Common myeloid progenitor, CD34-positive (primary cell): ENCODE measurements at regions of chr12 and their contacts with region 1.

Region 1: DNA sequence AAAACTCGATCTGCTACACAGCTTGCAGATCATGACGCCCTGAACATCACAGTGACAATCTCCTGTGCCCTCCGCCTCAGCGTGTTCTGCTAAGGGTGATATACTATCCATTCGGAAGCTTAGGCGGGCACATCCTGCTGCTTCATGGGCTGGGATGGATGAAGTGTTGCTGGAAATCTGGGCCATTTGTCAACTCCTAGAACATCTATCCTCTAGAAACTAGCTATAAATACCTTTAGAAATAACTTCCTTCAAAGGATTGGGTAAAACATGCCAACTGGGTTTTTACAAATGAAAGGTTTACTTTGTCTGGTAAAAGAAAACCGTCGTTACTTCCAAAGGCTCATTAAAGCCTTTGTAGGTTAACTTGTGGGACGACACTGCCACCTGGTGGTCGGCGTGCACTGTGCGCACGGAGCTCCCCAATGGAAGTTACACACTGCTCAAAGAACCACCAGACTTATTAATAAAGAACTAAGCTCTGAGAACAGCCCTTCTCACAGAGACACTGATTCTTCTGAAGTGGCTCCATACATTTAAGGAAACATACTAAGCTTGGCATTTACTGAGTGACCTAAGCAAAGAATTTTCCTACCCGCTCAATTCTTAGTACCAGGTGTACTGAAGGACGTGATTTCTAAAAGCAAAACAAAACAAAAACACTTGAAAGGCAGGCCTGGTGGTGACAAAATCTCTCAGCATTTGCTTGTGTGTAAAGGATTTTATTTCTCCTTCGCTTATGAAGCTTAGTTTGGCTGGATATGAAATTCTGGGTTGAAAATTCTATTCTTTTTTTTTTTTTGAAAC is 21.6 kb upstream of the CACNA2D4 start:
- DNase-seq: peak; percentile 83 to 93 (median 89)
- H3K4me3 ChIP-seq: no peak overlapping the region
- H3K27ac ChIP-seq: no peak overlapping the region
- H3K4me1 ChIP-seq: peaks cover 0 to 3% (median 2%) of the 10 kb centered on the region in 4 experiments
- H3K27me3 ChIP-seq: no peaks in the 10 kb centered on the region

Region 2: DNA sequence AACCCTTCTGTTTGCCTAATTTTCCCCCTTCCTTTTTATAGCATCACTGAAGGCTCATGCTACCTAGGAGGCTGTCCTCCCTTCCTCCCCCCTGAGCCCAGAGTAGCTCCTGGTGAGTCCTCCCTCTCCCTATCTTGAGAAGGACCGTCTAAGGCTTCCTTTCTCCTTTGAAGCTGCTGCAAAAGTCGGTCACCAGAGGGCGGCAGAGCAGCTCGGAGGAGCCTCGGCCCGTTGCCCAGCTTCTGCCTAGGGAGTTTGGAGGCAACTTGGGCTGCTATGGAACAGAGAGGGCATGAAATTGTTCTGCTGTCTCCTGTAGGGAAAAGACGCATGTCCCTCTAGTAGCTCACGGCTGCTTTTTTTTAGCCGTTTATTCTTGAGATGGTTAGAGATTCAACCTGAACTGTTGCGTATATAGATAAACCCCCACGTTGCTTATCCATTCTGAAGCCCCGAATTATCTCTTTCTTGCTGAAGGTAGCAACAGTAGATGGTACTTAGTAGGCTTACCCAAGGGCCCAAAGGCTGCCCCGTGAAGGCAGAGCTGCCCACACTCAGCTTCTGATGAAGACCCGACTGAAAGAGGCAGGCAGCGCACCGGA is 305.3 kb before region 1 on chr12:
- CTCF ChIA-PET with region 1: interaction called, 16 read pairs
- POLR2A ChIA-PET with region 1: no interaction called
- DNase-seq: peak; percentile 64 to 76 (median 66)
- H3K4me3 ChIP-seq: no peak overlapping the region
- H3K27ac ChIP-seq: no peak overlapping the region
- H3K4me1 ChIP-seq: peaks cover 2 to 24% (median 18%) of the 10 kb centered on the region in 4 experiments
- H3K27me3 ChIP-seq: peaks cover 2 to 41% (median 26%) of the 10 kb centered on the region in 5 experiments

Region 3: GRCh38 chr12:1795785-1796514 is 144.1 kb before region 1 on chr12:
- CTCF ChIA-PET with region 1: interaction called, 108 read pairs
- POLR2A ChIA-PET with region 1: interaction called, 11 read pairs
- DNase-seq: peak; percentile 90 to 92 (median 92)
- H3K4me3 ChIP-seq: peak overlapping the region; percentile 49 to 85 (median 66)
- H3K27ac ChIP-seq: peak overlapping the region in 1 of 2 experiments; percentile 6
- H3K4me1 ChIP-seq: peaks cover 0 to 22% (median 18%) of the 10 kb centered on the region in 4 experiments
- H3K27me3 ChIP-seq: no peaks in the 10 kb centered on the region

Region 4: DNA sequence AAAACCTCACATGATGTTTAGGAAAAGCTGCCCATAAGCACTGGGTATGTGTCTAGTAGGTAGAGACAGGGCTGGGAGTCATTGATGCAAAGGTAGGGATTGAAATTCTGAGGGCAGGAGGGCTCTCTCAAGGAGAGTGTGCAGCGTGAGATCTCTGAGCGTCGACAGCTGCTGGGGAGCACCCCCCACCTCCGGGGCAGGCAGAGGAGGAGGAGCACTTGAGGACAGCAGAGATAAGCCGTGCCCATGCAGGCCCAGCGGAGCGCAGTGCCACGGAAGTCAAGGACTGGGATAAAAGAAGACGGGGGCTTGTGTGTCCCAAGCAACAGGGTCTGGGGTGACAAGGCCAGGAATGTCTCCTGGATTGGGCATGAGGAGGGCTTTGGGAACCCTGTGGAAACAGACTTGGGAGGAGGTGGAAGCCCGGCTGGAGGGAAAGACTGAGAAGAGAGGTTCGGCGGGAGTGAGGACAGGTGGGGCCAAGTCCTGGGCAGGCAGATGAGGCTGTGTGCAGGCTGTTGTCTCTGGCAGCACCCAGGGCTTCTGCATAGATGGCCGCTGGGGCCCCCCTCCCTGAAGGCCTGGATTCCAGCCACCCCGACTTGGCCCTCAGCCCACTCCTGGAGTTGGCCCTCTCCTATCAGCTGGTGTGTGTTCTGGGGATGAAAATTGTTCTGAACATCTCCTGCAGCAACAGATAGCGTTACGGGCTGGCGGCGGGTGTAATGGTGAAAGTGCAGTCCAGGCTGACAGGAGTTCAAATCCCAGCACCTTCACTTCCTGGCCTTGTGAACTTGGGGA is 23.4 kb before region 1 on chr12:
- CTCF ChIA-PET with region 1: interaction called, 63 read pairs
- POLR2A ChIA-PET with region 1: interaction called, 5 read pairs
- DNase-seq: peak in 1 of 3 donors; percentile 31
- H3K4me3 ChIP-seq: no peak overlapping the region
- H3K27ac ChIP-seq: no peak overlapping the region
- H3K4me1 ChIP-seq: peaks cover 11 to 63% (median 54%) of the 10 kb centered on the region in 4 experiments
- H3K27me3 ChIP-seq: no peaks in the 10 kb centered on the region

Region 5: GRCh38 chr12:1956716-1957115 is 16.7 kb after region 1 on chr12:
- CTCF ChIA-PET with region 1: interaction called, 15 read pairs
- POLR2A ChIA-PET with region 1: interaction called, 5 read pairs
- DNase-seq: no peak
- H3K4me3 ChIP-seq: no peak overlapping the region
- H3K27ac ChIP-seq: no peak overlapping the region
- H3K4me1 ChIP-seq: no peaks in the 10 kb centered on the region
- H3K27me3 ChIP-seq: no peaks in the 10 kb centered on the region

Region 6: DNA sequence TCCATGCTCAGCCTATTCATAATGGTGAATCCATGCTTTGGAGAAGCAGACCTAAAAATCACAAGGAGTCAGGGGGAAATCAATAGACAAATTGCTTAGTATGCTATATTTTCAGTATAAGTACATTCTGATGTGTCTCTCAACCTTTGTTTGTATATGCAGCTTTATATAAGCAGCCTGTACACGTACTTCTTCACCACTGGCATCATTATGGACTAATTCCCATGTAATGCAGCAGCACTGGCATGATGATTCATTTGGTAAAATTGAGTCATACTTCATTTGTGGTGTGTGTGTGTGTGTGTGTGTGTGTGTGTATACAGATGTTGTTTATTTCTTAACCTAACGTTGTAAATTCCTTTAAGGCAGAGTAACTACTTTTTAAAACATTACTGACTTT is 53.3 kb after region 1 on chr12:
- CTCF ChIA-PET with region 1: no interaction called
- POLR2A ChIA-PET with region 1: no interaction called
- DNase-seq: no peak
- H3K4me3 ChIP-seq: no peak overlapping the region
- H3K27ac ChIP-seq: no peak overlapping the region
- H3K4me1 ChIP-seq: peaks cover 0 to 6% (median 0%) of the 10 kb centered on the region in 4 experiments
- H3K27me3 ChIP-seq: no peaks in the 10 kb centered on the region